Mammary epithelial cell (primary cell): ENCODE measurements at regions of chr14 and their contacts with region 1.

Region 1: DNA sequence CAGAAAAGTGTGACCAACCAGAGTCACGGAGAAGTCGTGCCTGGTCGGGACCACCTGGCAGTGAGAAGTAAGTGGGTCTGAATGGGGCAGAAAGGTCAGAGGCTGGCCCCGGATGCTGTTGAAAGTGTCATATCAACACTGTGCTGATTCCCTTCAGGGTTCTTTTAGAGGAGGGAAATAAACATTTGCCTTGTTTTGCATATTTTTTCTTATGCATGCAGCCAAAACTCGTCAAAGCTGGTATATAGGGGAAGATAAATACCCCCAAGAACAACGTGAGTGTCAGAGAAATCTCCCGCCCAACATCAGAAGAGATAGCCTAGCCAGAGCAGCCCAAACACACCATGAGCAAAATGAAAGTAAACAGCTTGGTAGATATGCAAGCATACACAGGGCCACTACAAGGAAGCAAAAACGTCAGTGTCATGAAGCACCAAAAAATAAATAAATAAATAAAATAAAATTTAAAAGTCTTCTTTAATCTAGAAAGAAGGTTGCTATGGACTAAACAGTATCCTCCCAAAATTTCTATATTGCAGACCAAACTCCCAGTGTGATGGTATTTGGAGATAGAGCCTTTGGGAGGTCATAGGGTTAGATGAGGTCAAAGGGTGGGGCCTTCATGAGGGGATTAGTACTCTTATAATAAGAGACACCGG is 22.1 kb downstream of the EIF5 start:
- DNase-seq: no peak
- H3K4me3 ChIP-seq: no peak overlapping the region
- H3K27ac ChIP-seq: no peak overlapping the region
- H3K4me1 ChIP-seq: peaks cover 31% of the 10 kb centered on the region
- H3K27me3 ChIP-seq: no peaks in the 10 kb centered on the region
- CTCF ChIP-seq: no peak

Region 2: DNA sequence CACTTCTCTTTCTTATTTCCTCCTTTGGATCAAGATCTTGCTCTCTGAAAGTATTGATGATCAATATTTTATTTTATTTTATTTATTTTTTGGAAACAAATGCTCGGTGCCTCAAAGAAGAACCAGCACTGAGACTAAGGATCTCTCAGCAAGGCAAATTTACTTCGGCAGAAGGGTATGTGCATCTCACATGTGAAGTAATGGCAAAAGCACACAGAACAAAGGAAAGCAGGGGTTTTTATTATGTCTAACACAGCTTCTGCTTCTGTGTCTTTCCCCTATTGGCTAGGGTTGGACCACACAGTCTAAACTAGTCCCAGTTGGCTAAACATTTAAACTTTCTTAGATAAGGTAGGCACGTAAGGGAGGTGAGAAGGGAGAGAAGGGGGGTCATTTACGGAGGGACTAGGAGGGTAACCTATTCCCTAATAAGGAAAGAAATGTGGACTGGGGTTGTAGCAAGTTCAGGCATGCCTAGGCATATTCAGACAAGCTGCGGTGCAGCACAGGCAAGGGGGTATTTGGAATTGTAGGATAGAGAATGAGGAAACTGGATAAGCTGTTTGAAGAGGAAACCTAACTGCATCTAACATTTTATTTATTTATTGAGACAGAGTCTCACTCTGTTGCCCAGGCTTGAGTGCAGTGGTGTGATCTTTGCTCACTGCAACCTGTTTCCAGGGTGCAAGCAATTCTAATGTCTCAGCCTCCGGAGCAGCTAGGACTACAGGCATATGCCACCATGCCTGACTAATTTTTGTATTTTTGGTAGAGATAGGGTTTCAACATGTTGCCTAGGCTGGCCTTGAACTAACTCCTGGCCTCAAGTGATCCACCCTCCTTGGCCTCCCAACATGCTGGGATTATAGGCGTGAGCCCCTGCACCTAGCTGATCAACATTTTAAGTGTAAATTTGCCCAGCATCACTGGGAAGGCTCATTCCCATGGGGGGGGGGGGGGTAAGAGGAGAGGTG is 112.1 kb before region 1 on chr14:
- CTCF ChIA-PET with region 1: no interaction called
- dilution Hi-C with region 1: no loop called
- in situ Hi-C with region 1: no loop called
- intact Hi-C with region 1: no loop called
- DNase-seq: peak; percentile 54
- H3K4me3 ChIP-seq: no peak overlapping the region
- H3K27ac ChIP-seq: no peak overlapping the region
- H3K4me1 ChIP-seq: peaks cover 6% of the 10 kb centered on the region
- H3K27me3 ChIP-seq: no peaks in the 10 kb centered on the region
- CTCF ChIP-seq: no peak

Region 3: DNA sequence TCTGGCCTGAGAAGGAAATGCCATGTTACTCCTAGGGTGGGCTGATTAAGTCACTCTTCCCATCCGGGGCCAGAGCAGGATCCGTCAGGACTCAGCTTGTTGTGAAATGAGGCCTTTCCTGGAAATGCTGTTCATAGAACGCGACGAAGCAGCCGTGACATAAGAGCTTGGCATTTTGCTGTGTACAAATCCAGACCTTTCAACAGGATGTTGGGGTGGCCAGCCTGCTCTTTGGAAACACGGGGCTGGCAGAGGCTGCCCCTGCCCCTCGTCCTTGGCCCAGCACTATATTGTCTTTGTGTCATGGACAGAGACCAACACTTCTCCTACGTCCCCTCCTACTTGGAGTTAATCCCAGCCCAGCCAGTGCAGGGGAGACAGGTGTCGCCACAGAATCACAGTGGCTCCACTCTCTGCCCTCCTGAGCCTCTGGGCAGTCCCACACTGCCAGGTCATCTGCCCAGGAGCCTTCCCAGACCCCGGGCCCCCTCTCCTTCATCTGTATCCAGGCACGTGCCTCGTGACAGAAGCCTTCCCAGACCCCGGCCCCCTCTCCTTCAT is 40.7 kb before region 1 on chr14:
- CTCF ChIA-PET with region 1: no interaction called
- dilution Hi-C with region 1: no loop called
- in situ Hi-C with region 1: no loop called
- intact Hi-C with region 1: no loop called
- DNase-seq: peak; percentile 28
- H3K4me3 ChIP-seq: no peak overlapping the region
- H3K27ac ChIP-seq: no peak overlapping the region
- H3K4me1 ChIP-seq: no peaks in the 10 kb centered on the region
- H3K27me3 ChIP-seq: no peaks in the 10 kb centered on the region
- CTCF ChIP-seq: no peak

Region 4: DNA sequence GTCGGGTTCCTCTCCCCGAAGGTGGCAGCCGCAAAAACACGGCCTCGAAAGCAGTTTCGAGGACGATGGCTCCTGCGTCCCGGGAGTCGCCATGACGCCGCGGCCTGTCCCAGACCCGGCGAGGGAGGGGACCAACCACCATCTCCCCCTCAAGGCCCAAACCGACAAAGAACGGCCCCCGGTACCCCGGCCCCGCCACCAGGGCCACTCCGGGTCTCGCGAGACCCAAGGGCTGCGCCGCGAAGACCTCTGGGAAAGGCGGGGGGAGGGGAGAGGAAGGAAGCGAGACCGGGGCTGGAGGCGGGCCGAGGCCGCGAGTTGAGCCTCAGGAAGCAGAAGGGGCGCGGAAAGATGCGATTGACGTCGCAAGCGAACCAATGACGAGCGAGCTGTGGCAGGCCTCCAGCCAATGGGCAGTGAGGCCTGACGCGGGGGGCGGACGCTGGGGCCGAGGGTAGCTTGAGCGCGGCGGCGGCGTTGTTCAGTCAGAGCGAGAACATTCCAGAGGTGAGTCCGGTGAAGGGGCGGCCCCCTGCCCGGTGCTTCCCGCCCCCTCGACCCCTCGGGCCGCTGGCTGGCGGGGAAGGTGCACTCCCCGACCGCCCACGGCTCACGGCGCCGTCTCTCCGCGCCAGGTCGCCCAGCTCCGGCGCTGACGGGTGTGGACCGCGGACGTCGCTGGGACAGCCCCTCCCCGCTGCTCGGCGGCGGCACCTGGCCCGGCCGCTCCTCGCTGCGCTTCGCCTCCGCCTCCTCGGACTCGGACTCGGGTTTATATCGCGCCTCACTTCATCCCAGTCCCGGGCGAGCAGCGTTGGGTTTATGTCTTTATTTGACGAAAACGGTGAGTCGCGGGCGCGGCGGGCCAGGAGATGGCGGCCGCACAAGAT is 22.2 kb before region 1 on chr14 and contains the start of gene EIF5:
- CTCF ChIA-PET with region 1: no interaction called
- dilution Hi-C with region 1: no loop called
- in situ Hi-C with region 1: no loop called
- intact Hi-C with region 1: loop called (anchors 2 kb)
- DNase-seq: peak; percentile 98
- H3K4me3 ChIP-seq: peak within 1 kb of the TSS; percentile 83 to 95 (median 87)
- H3K27ac ChIP-seq: peak within 1 kb of the TSS; percentile 94
- H3K4me1 ChIP-seq: peaks cover 19% of the 10 kb centered on the region
- H3K27me3 ChIP-seq: no peaks in the 10 kb centered on the region
- CTCF ChIP-seq: peak in 1 of 2 donors; percentile 35
- total RNA-seq, gene EIF5: 142 to 333 TPM

Region 5: DNA sequence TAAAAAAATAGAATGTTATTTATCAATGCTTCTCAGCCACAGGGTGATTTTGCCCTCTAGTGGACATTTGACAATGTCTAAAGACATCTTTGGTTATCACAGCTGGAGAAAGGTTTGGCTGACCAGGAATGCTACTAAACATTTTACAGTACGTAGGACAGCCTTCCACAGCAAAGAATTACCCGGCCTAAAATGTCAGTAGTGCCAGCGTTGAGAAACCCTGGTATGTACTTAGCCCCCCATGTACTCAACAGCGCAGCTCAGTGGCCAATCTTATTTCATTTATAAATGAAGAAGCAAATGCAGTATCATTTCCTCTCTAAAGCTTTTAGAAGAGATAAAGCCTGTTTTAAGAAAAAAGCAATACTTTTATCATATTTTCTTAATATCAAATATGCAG is 34.9 kb after region 1 on chr14:
- CTCF ChIA-PET with region 1: no interaction called
- dilution Hi-C with region 1: loop called (anchors 5 kb)
- in situ Hi-C with region 1: no loop called
- intact Hi-C with region 1: loop called (anchors 2 kb)
- DNase-seq: peak; percentile 51
- H3K4me3 ChIP-seq: no peak overlapping the region
- H3K27ac ChIP-seq: no peak overlapping the region
- H3K4me1 ChIP-seq: peaks cover 25% of the 10 kb centered on the region
- H3K27me3 ChIP-seq: no peaks in the 10 kb centered on the region
- CTCF ChIP-seq: peak; percentile 70 to 74

Region 6: GRCh38 chr14:103746701-103747100 is 390.5 kb after region 1 on chr14:
- CTCF ChIA-PET with region 1: no interaction called
- dilution Hi-C with region 1: no loop called
- in situ Hi-C with region 1: no loop called
- intact Hi-C with region 1: no loop called
- DNase-seq: no peak
- H3K4me3 ChIP-seq: no peak overlapping the region
- H3K27ac ChIP-seq: no peak overlapping the region
- H3K4me1 ChIP-seq: no peaks in the 10 kb centered on the region
- H3K27me3 ChIP-seq: no peaks in the 10 kb centered on the region
- CTCF ChIP-seq: no peak